Activated CD8-positive, alpha-beta T cell treated with anti-CD3 and anti-CD28 coated beads for 36 hours (primary cell): ENCODE measurements at regions of chr19 and their contacts with region 1.

Region 1: DNA sequence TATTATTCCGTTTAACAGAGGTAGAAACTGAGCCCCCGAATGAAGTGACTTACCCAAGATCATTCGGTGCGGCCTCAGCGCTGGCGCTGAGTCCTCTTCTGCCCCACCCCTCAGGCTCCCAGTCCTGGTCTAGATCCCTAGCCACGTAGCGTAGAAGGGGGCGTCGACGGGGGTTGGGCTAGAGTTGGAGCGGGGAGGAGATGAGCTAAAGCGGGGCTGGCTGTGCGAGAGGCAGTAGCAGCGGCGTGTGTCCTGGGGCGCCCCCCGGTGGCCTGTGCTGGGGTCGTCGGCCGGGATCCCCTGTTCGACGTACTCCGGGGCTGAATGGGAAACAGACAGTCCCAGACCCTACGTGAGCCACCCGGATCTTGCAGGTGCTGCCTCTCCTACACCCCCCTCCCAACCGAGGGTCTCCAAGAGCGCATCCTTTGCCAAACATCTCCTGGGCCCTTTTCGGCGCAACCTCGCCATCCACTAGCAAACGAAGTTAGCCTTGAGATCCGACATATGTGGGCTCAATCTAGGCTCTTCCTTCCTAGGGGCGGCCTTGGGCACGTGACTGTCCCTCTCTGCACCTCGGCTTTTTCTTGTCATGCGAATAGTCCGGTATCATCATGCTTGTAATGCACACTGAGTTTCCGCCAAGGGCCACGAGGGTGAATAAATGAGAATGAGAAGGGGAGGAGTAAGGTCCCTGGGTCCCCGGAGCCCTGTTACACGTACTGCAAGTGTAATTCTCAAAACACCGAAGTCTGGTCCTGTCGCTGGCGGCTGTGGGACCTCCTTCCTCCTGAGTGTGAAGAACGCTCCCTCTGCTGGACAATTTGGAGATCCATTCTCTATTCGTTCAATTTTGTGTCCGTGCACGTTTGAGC is 47.7 kb downstream of the CYP4F22 start:
- DNase-seq: peak; percentile 99
- ATAC-seq: peak; percentile 86
- H3K4me3 Mint-ChIP-seq: peak overlapping the region; percentile 74
- H3K27ac Mint-ChIP-seq: peak overlapping the region; percentile 84
- H3K4me1 Mint-ChIP-seq: peaks cover 14% of the 10 kb centered on the region
- H3K27me3 Mint-ChIP-seq: no peaks in the 10 kb centered on the region
- CTCF ChIP-seq: peak; percentile 83

Region 2: GRCh38 chr19:15177269-15178116 is 378.5 kb before region 1 on chr19:
- CTCF ChIA-PET with region 1: interaction called, 4 read pairs
- POLR2A ChIA-PET with region 1: no interaction called
- intact Hi-C with region 1: loop called (anchors 5 kb)
- DNase-seq: peak; percentile 90
- ATAC-seq: peak; percentile 98
- H3K4me3 Mint-ChIP-seq: peak overlapping the region; percentile 42
- H3K27ac Mint-ChIP-seq: no peak overlapping the region
- H3K4me1 Mint-ChIP-seq: peaks cover 4% of the 10 kb centered on the region
- H3K27me3 Mint-ChIP-seq: peaks cover 15% of the 10 kb centered on the region
- CTCF ChIP-seq: peak; percentile 95

Region 3: DNA sequence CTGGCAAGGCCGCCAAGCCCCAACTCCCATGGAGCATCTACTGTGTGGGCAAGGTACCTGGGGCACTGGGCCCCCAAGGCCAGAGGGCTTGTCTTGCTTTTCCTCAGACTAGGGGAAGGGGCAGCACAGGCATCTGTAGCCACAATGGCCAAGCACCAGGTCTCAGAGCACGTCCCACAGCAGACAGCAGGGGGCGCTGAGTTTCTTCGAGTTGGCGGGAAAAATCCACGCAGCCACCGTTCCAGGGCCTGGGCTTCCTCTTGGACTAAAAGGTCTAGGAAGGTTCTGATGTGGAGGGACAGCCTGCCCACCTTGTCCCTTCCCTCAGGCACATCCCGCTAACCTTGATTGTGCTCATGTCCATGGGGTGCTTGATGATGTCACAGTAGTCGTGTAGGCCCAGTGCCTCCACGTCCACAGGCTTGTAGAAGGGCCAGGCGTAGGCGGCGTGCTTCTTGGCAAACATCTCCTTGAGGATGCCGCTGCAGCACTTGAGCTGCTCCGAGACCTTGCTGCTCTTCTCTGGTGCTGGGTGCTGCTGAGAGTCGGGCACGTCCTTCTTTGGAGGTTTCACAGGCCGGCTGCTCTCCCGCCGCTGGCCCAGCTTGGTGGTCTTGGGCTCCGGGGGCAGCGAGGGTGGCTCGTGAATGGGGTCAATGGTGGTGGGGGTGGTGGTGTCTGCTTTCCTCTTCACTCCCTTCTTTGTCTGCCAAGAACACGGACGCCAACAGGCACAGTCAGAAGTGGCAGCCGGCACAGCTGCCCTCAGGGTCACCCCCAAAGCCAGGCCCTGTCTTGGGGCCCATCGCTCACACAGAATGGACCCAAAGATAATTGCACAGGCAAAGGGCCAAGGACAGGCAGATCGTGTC is 291.7 kb before region 1 on chr19:
- CTCF ChIA-PET with region 1: no interaction called
- POLR2A ChIA-PET with region 1: no interaction called
- intact Hi-C with region 1: loop called (anchors 10 kb)
- DNase-seq: peak; percentile 82
- ATAC-seq: peak; percentile 74
- H3K4me3 Mint-ChIP-seq: no peak overlapping the region
- H3K27ac Mint-ChIP-seq: no peak overlapping the region
- H3K4me1 Mint-ChIP-seq: peaks cover 9% of the 10 kb centered on the region
- H3K27me3 Mint-ChIP-seq: no peaks in the 10 kb centered on the region
- CTCF ChIP-seq: peak; percentile 69

Region 4: GRCh38 chr19:15379083-15379995 is 176.7 kb before region 1 on chr19 and contains the start of gene AKAP8:
- CTCF ChIA-PET with region 1: interaction called, 17 read pairs
- POLR2A ChIA-PET with region 1: no interaction called
- intact Hi-C with region 1: loop called (anchors 5 kb)
- DNase-seq: peak; percentile 98
- ATAC-seq: peak; percentile 90
- H3K4me3 Mint-ChIP-seq: peak within 1 kb of the TSS; percentile 86
- H3K27ac Mint-ChIP-seq: peak within 1 kb of the TSS; percentile 99
- H3K4me1 Mint-ChIP-seq: peaks cover 34% of the 10 kb centered on the region
- H3K27me3 Mint-ChIP-seq: no peaks in the 10 kb centered on the region
- CTCF ChIP-seq: no peak
- total RNA-seq, gene AKAP8: 47.6 to 48.2 TPM

Region 5: GRCh38 chr19:15432629-15433518 is 123.1 kb before region 1 on chr19:
- CTCF ChIA-PET with region 1: interaction called, 19 read pairs
- POLR2A ChIA-PET with region 1: no interaction called
- intact Hi-C with region 1: no loop called
- DNase-seq: peak; percentile 94
- ATAC-seq: peak; percentile 93
- H3K4me3 Mint-ChIP-seq: peak overlapping the region; percentile 82
- H3K27ac Mint-ChIP-seq: peak overlapping the region; percentile 86
- H3K4me1 Mint-ChIP-seq: peaks cover 28% of the 10 kb centered on the region
- H3K27me3 Mint-ChIP-seq: no peaks in the 10 kb centered on the region
- CTCF ChIP-seq: no peak

Region 6: DNA sequence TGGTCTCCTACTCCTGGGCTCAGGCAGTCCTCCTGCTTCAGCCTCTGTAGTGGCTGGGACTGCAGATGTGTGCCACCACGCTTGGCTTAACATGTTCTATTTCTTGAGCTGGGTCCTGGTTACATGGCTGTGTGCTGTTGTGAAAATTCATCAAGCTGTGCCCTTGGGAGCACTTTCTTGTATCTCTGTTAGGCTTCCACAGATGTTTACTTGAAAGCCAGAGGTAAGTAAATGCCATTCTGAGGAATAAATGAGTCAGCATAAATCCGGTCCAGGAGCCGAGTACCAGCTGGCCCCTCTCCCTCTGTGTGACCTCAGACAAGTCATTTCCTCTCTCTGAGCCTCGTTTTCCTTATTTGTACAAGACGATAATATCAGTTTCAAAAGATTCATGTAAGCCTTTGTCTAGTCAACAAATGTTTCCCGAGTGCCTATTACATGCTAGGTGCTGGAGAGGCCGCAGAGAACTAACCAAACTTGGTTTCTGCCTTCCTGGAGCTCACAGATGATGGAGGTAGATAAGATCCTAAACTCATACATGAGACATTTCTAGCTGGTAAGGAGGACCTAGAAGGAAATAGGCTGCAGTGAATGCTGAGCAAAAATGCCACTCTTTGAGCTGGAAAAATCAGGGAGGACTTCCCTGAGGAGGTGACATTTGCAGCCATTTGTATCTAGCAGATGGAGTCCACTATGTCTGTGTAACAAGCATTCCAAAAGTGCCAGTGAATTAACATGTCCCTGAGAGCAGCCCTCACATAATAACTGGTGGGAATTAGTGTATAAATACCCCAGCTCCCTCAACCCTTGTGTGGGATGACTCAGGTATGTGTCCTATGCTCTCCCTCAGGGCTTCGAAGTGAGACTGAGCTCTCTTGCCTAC is 88.9 kb before region 1 on chr19:
- CTCF ChIA-PET with region 1: interaction called, 42 read pairs
- POLR2A ChIA-PET with region 1: interaction called, 8 read pairs
- intact Hi-C with region 1: loop called (anchors 5 kb)
- DNase-seq: peak; percentile 83
- ATAC-seq: peak; percentile 43
- H3K4me3 Mint-ChIP-seq: peak overlapping the region; percentile 45
- H3K27ac Mint-ChIP-seq: peak overlapping the region; percentile 96
- H3K4me1 Mint-ChIP-seq: peaks cover 52% of the 10 kb centered on the region
- H3K27me3 Mint-ChIP-seq: no peaks in the 10 kb centered on the region
- CTCF ChIP-seq: no peak

Region 7: DNA sequence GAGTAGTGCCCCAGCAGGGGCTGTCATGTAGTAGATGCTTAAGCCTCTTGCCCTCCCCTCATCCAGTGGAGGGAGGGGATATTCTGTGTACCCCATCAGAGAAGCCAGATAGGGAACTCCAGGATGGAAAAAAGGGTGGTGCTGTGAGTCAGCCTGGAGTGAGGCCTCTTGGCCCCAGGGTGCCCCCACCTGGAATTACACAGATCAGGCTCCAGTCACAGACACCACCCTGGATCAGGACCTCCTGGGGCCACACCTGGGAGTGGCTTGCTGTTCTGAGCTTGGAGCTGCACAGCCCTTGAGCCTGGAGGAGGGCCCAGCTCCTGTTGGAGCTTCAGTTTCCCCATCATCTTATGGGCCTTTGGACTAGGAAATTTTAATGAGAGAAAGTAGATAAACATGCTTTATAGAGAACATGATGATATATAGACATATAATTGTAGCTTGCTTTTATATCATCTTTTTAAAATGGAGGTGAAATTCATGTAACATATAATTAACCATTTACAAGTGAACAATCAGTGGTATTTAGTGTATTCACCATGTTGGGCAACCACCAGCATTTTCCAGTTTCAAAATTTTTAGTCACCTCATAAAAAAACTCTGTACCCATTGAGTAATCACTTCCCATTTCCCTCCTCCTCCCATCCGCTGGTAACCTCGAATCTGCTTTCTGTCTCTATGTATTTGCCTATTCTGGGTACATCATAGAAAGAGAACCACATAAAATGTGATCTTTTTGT is 23.0 kb before region 1 on chr19:
- CTCF ChIA-PET with region 1: interaction called, 7 read pairs
- POLR2A ChIA-PET with region 1: interaction called, 3 read pairs
- intact Hi-C with region 1: loop called (anchors 2 kb)
- DNase-seq: peak; percentile 51
- ATAC-seq: peak; percentile 81
- H3K4me3 Mint-ChIP-seq: no peak overlapping the region
- H3K27ac Mint-ChIP-seq: peak overlapping the region; percentile 66
- H3K4me1 Mint-ChIP-seq: peaks cover 32% of the 10 kb centered on the region
- H3K27me3 Mint-ChIP-seq: no peaks in the 10 kb centered on the region
- CTCF ChIP-seq: no peak

Region 8: DNA sequence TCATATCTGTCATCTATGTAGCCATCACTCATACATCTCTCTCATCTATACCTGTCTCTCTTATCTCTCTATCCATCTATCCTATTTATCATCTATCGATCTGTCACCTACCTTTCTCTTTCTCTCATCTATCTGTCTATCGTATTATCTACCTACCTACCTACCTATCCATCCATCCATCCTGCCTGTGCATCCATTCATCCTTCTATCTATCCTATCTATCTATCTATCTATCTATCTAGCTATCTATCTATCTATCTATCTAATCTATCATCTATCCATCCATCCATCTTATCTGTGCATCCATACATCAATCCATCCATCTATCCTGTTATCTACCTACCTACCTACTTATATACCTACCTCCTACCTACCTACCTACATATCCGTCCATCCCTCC is 14.4 kb after region 1 on chr19:
- CTCF ChIA-PET with region 1: no interaction called
- POLR2A ChIA-PET with region 1: no interaction called
- intact Hi-C with region 1: no loop called
- DNase-seq: no peak
- ATAC-seq: no peak
- H3K4me3 Mint-ChIP-seq: no peak overlapping the region
- H3K27ac Mint-ChIP-seq: no peak overlapping the region
- H3K4me1 Mint-ChIP-seq: no peaks in the 10 kb centered on the region
- H3K27me3 Mint-ChIP-seq: peaks cover 32% of the 10 kb centered on the region
- CTCF ChIP-seq: no peak

Region 9: GRCh38 chr19:15587663-15588062 is 31.7 kb after region 1 on chr19:
- CTCF ChIA-PET with region 1: no interaction called
- POLR2A ChIA-PET with region 1: no interaction called
- intact Hi-C with region 1: no loop called
- DNase-seq: no peak
- ATAC-seq: no peak
- H3K4me3 Mint-ChIP-seq: no peak overlapping the region
- H3K27ac Mint-ChIP-seq: no peak overlapping the region
- H3K4me1 Mint-ChIP-seq: peaks cover 4% of the 10 kb centered on the region
- H3K27me3 Mint-ChIP-seq: peaks cover 16% of the 10 kb centered on the region
- CTCF ChIP-seq: no peak

Region 10: DNA sequence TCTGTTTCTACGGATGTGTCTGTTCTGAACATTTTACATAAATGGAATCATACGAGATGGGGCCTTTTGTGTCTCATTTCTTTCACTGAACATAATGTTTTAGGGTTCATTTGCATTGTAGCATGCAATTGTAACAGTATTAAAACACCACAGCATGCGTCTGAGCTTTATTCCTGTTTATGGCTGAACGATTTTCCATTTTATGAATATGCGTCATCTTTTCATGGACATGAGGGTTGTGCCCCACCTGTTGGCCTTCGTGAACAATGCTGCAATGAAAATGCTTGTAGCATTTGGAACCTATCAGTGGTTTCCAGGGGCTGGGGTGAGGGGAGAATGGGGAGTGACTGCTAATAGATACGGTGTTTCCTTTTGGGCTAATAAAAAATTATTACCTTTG is 254.3 kb after region 1 on chr19:
- CTCF ChIA-PET with region 1: no interaction called
- POLR2A ChIA-PET with region 1: no interaction called
- intact Hi-C with region 1: no loop called
- DNase-seq: no peak
- ATAC-seq: no peak
- H3K4me3 Mint-ChIP-seq: no peak overlapping the region
- H3K27ac Mint-ChIP-seq: no peak overlapping the region
- H3K4me1 Mint-ChIP-seq: peaks cover 7% of the 10 kb centered on the region
- H3K27me3 Mint-ChIP-seq: peaks cover 1% of the 10 kb centered on the region
- CTCF ChIP-seq: no peak